ENCODE measurements at regions of chr7 and their contacts with region 1.

Region 1: DNA sequence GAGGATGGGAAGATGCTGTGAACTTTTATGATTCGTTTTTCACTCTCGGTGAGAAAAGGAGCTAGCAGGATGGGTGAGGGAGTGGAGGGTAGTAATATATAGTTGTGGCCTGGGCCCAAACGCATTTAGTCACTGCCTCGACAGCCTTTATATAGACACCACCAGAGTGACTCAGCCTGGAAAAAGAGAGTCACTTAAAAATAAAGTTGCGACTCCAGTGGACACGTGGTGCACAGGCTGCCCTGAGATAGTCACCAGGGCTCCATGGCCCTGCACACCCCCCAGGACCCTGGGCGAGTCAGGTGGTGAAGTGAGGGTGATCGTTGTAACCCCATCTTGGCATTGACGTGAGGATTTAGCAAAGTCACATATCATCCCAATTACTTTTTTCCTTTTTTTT is 106.7 kb downstream of the CUX1 start:
- DNase-seq: peak; percentile 88
- ATAC-seq: peak; percentile 96
- H3K4me3 ChIP-seq: no peak overlapping the region; the same call in 1 of the 2 replicates
- H3K27ac ChIP-seq: peak overlapping the region; percentile 95
- H3K4me1 ChIP-seq: peaks cover 21% of the 10 kb centered on the region
- H3K27me3 ChIP-seq: no peaks in the 10 kb centered on the region
- CTCF ChIP-seq: no peak

Region 2: GRCh38 chr7:101874028-101874427 is 50.1 kb before region 1 on chr7:
- CTCF ChIA-PET with region 1: no interaction called
- POLR2A ChIA-PET with region 1: no interaction called
- intact Hi-C with region 1: no loop called
- DNase-seq: no peak
- ATAC-seq: no peak
- H3K4me3 ChIP-seq: no peak overlapping the region
- H3K27ac ChIP-seq: no peak overlapping the region
- H3K4me1 ChIP-seq: peaks cover 31% of the 10 kb centered on the region
- H3K27me3 ChIP-seq: no peaks in the 10 kb centered on the region
- CTCF ChIP-seq: no peak

Region 3: DNA sequence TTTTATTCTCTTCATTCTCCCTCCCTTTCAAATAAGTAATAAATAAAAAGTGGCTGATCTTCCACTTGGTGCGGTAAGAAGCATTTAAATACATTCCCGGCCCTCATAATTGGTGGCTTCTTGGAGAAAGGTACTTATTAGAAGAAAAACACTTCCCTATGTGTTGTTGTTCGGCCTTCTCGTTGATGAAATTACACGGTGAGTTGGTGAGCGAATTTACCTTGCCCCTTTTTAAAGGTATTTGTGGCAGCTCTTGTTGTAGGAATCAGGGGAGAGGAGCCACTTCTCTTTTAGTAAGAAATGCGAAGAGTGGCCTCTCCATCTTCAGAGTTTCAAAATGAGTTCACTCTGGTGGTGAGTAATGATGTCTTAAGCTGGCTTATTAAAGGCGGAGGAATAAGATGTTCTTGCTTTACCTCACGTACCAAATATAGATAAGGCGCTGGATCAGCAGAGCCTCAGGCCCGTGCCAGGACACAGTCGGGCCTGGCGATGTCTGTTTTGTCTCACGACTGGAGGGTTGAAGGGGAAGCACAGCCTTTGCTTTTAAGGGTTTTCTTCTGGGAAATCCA is 29.2 kb after region 1 on chr7:
- CTCF ChIA-PET with region 1: no interaction called
- POLR2A ChIA-PET with region 1: no interaction called
- intact Hi-C with region 1: loop called (anchors 1 kb)
- DNase-seq: peak; percentile 61
- ATAC-seq: peak; percentile 62
- H3K4me3 ChIP-seq: peak overlapping the region; percentile 33; the same call in 1 of the 2 replicates
- H3K27ac ChIP-seq: peak overlapping the region; percentile 92
- H3K4me1 ChIP-seq: peaks cover 28% of the 10 kb centered on the region
- H3K27me3 ChIP-seq: no peaks in the 10 kb centered on the region
- CTCF ChIP-seq: no peak

Measured in PC-3 (cell line).